B cell (primary cell): ENCODE measurements at regions of chr15 and their contacts with region 1.

Region 1: GRCh38 chr15:31326156-31326732 is 391 bp upstream of the KLF13 start:
- DNase-seq: peak; percentile 100
- ATAC-seq: peak; percentile 70
- H3K4me3 ChIP-seq: peak overlapping the region; percentile 11 to 89 (median 80)
- H3K4me3 Mint-ChIP-seq: peak overlapping the region; percentile 95
- H3K27ac ChIP-seq: peak overlapping the region; percentile 79 to 97
- H3K27ac Mint-ChIP-seq: peak overlapping the region; percentile 99
- H3K4me1 ChIP-seq: peaks cover 49 to 59% of the 10 kb centered on the region in 2 donors
- H3K4me1 Mint-ChIP-seq: peaks cover 62% of the 10 kb centered on the region
- H3K27me3 ChIP-seq: no peaks in the 10 kb centered on the region
- H3K27me3 Mint-ChIP-seq: no peaks in the 10 kb centered on the region
- CTCF ChIP-seq: no peak

Region 2: DNA sequence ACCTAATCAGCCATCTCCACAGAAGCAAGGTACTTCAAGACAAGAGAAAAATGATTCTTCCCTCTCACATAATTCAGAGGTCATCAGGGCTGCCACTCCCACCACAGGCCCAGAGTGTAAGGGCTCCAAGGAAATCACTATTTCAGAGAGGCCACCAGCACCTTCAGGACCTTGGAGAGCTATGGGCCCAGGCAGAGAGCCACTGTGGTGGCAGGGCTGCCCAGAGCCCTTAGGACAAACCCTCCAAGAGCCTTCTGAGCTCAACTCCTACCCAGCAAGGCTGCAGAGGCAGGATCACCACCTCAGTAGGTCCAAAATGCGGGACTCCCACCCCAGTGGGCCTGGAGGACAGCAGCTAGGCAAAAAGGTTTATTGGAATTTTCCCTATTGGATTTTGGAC is 440.4 kb before region 1 on chr15:
- CTCF ChIA-PET with region 1: no interaction called
- POLR2A ChIA-PET with region 1: no interaction called
- intact Hi-C with region 1: no loop called
- DNase-seq: no peak
- ATAC-seq: no peak
- H3K4me3 ChIP-seq: no peak overlapping the region
- H3K4me3 Mint-ChIP-seq: no peak overlapping the region
- H3K27ac ChIP-seq: no peak overlapping the region
- H3K27ac Mint-ChIP-seq: no peak overlapping the region
- H3K4me1 ChIP-seq: no peaks in the 10 kb centered on the region
- H3K4me1 Mint-ChIP-seq: no peaks in the 10 kb centered on the region
- H3K27me3 ChIP-seq: no peaks in the 10 kb centered on the region
- H3K27me3 Mint-ChIP-seq: peaks cover 3% of the 10 kb centered on the region
- CTCF ChIP-seq: no peak

Region 3: GRCh38 chr15:31215490-31216214 is 110.6 kb before region 1 on chr15:
- CTCF ChIA-PET with region 1: interaction called, 70 read pairs
- POLR2A ChIA-PET with region 1: interaction called, 47 read pairs
- intact Hi-C with region 1: loop called (anchors 1 kb)
- DNase-seq: peak; percentile 90
- ATAC-seq: peak; percentile 82
- H3K4me3 ChIP-seq: peak overlapping the region in 4 of 5 experiments; percentile 35 to 72 (median 66)
- H3K4me3 Mint-ChIP-seq: peak overlapping the region; percentile 87
- H3K27ac ChIP-seq: peak overlapping the region; percentile 66 to 79
- H3K27ac Mint-ChIP-seq: peak overlapping the region; percentile 87
- H3K4me1 ChIP-seq: peaks cover 14 to 25% of the 10 kb centered on the region in 2 donors
- H3K4me1 Mint-ChIP-seq: peaks cover 23% of the 10 kb centered on the region
- H3K27me3 ChIP-seq: no peaks in the 10 kb centered on the region
- H3K27me3 Mint-ChIP-seq: no peaks in the 10 kb centered on the region
- CTCF ChIP-seq: peak; percentile 96

Region 4: GRCh38 chr15:31302778-31303725 is 23.2 kb before region 1 on chr15:
- CTCF ChIA-PET with region 1: interaction called, 10 read pairs
- POLR2A ChIA-PET with region 1: interaction called, 4 read pairs
- intact Hi-C with region 1: no loop called
- DNase-seq: peak; percentile 35
- ATAC-seq: peak; percentile 43
- H3K4me3 ChIP-seq: no peak overlapping the region
- H3K4me3 Mint-ChIP-seq: no peak overlapping the region
- H3K27ac ChIP-seq: no peak overlapping the region
- H3K27ac Mint-ChIP-seq: peak overlapping the region; percentile 26
- H3K4me1 ChIP-seq: peaks cover 30 to 53% of the 10 kb centered on the region in 2 donors
- H3K4me1 Mint-ChIP-seq: peaks cover 50% of the 10 kb centered on the region
- H3K27me3 ChIP-seq: no peaks in the 10 kb centered on the region
- H3K27me3 Mint-ChIP-seq: no peaks in the 10 kb centered on the region
- CTCF ChIP-seq: peak; percentile 12

Region 5: GRCh38 chr15:31344823-31345605 is 18.8 kb after region 1 on chr15:
- CTCF ChIA-PET with region 1: interaction called, 5 read pairs
- POLR2A ChIA-PET with region 1: interaction called, 19 read pairs
- intact Hi-C with region 1: loop called (anchors 1 kb)
- DNase-seq: no peak
- ATAC-seq: peak; percentile 62
- H3K4me3 ChIP-seq: peak overlapping the region in 4 of 5 experiments; percentile 42 to 70 (median 58)
- H3K4me3 Mint-ChIP-seq: peak overlapping the region; percentile 95
- H3K27ac ChIP-seq: peak overlapping the region; percentile 90 to 97
- H3K27ac Mint-ChIP-seq: peak overlapping the region; percentile 99
- H3K4me1 ChIP-seq: peaks cover 100% of the 10 kb centered on the region in 2 donors
- H3K4me1 Mint-ChIP-seq: peaks cover 99% of the 10 kb centered on the region
- H3K27me3 ChIP-seq: no peaks in the 10 kb centered on the region
- H3K27me3 Mint-ChIP-seq: no peaks in the 10 kb centered on the region
- CTCF ChIP-seq: no peak

Region 6: GRCh38 chr15:31365655-31366127 is 39.4 kb after region 1 on chr15:
- CTCF ChIA-PET with region 1: interaction called, 9 read pairs
- POLR2A ChIA-PET with region 1: interaction called, 32 read pairs
- intact Hi-C with region 1: loop called (anchors 1 kb)
- DNase-seq: peak; percentile 79
- ATAC-seq: peak; percentile 31
- H3K4me3 ChIP-seq: peak overlapping the region in 4 of 5 experiments; percentile 5 to 33 (median 15)
- H3K4me3 Mint-ChIP-seq: peak overlapping the region; percentile 80
- H3K27ac ChIP-seq: no peak overlapping the region
- H3K27ac Mint-ChIP-seq: peak overlapping the region; percentile 93
- H3K4me1 ChIP-seq: peaks cover 85 to 87% of the 10 kb centered on the region in 2 donors
- H3K4me1 Mint-ChIP-seq: peaks cover 95% of the 10 kb centered on the region
- H3K27me3 ChIP-seq: no peaks in the 10 kb centered on the region
- H3K27me3 Mint-ChIP-seq: no peaks in the 10 kb centered on the region
- CTCF ChIP-seq: peak; percentile 59